GM13976 (cell line): ENCODE measurements at regions of chr11 and their contacts with region 1.

Region 1: GRCh38 chr11:128290106-128290840 is 297.1 kb downstream of the ETS1 start:
- DNase-seq: peak; percentile 70
- CTCF ChIP-seq: peak; percentile 51

Region 2: GRCh38 chr11:128412847-128413791 is 122.8 kb after region 1 on chr11:
- in situ Hi-C with region 1: no loop called
- DNase-seq: no peak
- CTCF ChIP-seq: no peak

Region 3: GRCh38 chr11:128624269-128625175 is 334.2 kb after region 1 on chr11:
- in situ Hi-C with region 1: loop called (anchors 5 kb)
- DNase-seq: peak; percentile 64
- CTCF ChIP-seq: no peak

Region 4: DNA sequence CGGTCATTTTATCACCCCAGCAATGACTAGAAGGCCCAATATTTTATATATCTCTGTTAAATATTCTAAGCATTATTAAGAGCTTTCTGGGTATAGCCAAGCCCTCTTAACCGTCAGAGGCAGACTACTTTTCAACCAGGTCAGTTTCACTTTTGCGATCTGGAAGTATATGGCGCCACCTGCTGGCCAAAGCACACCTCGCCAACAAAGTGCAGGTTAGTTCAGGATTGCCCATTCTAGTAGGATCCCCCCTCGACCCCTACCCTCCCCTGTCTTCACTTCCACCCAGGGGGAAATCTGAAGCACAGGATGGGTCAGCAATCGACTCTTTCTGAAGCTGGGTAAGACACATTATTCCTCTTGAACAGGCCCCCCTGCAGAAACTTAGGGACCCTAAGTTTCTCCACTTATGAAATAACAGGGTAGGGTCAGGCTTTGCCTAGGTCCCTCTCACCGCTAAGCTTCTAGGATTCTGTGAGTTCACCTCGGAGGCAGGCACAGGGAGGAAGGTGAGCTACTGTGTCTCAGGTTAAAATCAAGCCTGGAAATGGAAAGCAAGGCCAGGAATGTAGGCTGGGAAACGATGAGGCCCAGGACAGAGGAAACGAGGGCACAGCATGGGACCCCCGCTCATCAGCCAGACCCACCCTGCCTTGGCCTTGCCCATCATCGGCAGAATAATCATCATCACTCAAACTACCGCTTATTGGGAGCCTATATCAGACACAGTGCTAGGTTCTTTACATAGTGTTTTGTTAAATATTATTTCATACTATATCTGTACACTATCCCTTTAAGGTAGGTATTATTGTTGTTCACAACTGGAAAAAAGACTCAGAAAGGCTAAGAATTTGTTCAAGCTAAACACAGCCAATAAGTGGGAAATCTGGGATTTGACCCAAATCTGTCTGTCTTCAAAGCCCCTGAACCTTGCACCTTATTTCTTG is 541.2 kb after region 1 on chr11:
- in situ Hi-C with region 1: loop called (anchors 25 kb)
- DNase-seq: peak; percentile 70
- CTCF ChIP-seq: peak; percentile 77